GM18951 (cell line): ENCODE measurements at regions of chr10 and their contacts with region 1.

Region 1: DNA sequence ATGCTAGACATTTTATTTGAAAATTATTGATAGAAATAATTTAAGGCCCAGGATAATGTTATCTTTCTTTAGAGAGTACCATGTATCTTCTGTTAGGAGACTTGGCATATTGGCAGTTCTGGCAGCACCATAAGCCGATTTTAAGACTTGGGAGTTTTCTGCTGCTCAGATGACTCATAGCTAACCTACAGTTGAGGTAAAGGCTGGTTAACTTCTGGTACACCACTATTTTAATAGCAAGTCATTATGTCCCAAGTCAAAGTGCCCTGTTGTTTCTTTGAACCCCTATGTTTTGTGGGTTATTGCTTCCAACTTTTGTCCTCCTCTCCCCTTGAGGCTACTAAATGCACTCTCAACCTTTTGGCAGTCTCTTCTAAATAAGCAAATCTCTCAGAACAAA is 25.2 kb downstream of the ATRNL1 start:
- POLR2A ChIP-seq: no peak

Region 2: GRCh38 chr10:114879541-114880158 is 238.7 kb before region 1 on chr10:
- in situ Hi-C with region 1: loop called (anchors 10 kb)
- POLR2A ChIP-seq: no peak